ENCODE measurements at regions of chr12 and their contacts with region 1.

Region 1: GRCh38 chr12:29552324-29552927 is 54.9 kb upstream of the OVCH1 start:
- DNase-seq: peak; percentile 83
- ATAC-seq: peak; percentile 81
- H3K4me3 ChIP-seq: no peak overlapping the region
- H3K27ac ChIP-seq: no peak overlapping the region
- H3K4me1 ChIP-seq: peaks cover 6% of the 10 kb centered on the region
- H3K27me3 ChIP-seq: no peaks in the 10 kb centered on the region
- CTCF ChIP-seq: peak; percentile 96

Region 2: GRCh38 chr12:29581631-29582030 is 29.2 kb after region 1 on chr12:
- CTCF ChIA-PET with region 1: interaction called, 7 read pairs
- POLR2A ChIA-PET with region 1: no interaction called
- intact Hi-C with region 1: loop called (anchors 2 kb)
- DNase-seq: peak; percentile 91
- ATAC-seq: peak; percentile 87
- H3K4me3 ChIP-seq: peak overlapping the region; percentile 47; the same call in 1 of the 2 replicates
- H3K27ac ChIP-seq: peak overlapping the region; percentile 87
- H3K4me1 ChIP-seq: peaks cover 52% of the 10 kb centered on the region
- H3K27me3 ChIP-seq: no peaks in the 10 kb centered on the region
- CTCF ChIP-seq: no peak

Region 3: DNA sequence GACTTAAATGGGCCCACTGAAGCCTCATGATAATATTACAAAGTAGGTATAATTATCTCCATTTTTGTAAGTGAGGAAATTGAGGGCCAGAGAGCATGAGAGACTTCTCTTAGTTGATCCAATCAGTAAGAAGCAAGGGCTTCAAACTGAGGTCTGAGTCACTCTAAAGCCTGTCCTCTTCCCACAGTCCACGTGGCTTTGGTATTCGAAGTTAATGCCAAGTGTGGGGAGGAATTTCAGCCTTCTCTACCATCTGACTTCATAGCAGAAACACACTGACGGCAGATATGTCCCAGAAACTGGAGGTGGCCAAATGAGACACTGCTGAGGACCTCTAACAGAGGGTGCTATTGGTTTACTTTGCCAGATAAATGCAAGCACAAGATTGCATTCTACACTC is 59.5 kb after region 1 on chr12:
- CTCF ChIA-PET with region 1: no interaction called
- POLR2A ChIA-PET with region 1: no interaction called
- intact Hi-C with region 1: no loop called
- DNase-seq: no peak
- ATAC-seq: no peak
- H3K4me3 ChIP-seq: no peak overlapping the region
- H3K27ac ChIP-seq: no peak overlapping the region
- H3K4me1 ChIP-seq: peaks cover 4% of the 10 kb centered on the region; the same call in 1 of the 2 replicates
- H3K27me3 ChIP-seq: peaks cover 30% of the 10 kb centered on the region
- CTCF ChIP-seq: no peak

Region 4: DNA sequence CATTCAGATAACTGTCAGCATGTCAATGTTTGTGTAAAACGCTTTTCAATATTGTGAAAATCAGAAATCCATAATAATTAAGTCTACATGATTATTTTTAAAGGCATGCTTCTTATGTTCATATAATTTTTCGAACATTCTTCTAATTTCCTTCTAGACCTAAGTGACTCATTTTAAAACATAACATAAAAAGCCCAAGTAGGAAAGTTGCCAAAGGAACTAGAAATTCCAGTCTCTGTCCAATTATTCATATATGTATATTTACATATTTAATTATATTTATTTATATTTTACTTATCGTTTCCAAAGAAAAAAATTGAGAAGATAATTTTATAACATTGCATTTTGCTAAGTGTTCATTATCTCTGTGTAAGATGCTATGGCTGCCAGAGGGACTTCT is 120.9 kb after region 1 on chr12:
- CTCF ChIA-PET with region 1: no interaction called
- POLR2A ChIA-PET with region 1: no interaction called
- intact Hi-C with region 1: loop called (anchors 5 kb)
- DNase-seq: peak; percentile 74
- ATAC-seq: peak; percentile 13; the same call in 1 of the 2 replicates
- H3K4me3 ChIP-seq: no peak overlapping the region
- H3K27ac ChIP-seq: no peak overlapping the region
- H3K4me1 ChIP-seq: peaks cover 6% of the 10 kb centered on the region
- H3K27me3 ChIP-seq: peaks cover 22% of the 10 kb centered on the region
- CTCF ChIP-seq: no peak

Region 5: GRCh38 chr12:29782285-29782870 is 230.0 kb after region 1 on chr12:
- CTCF ChIA-PET with region 1: no interaction called
- POLR2A ChIA-PET with region 1: no interaction called
- intact Hi-C with region 1: loop called (anchors 1 kb)
- DNase-seq: peak; percentile 34
- ATAC-seq: no peak
- H3K4me3 ChIP-seq: peak overlapping the region; percentile 69; the same call in 1 of the 2 replicates
- H3K27ac ChIP-seq: no peak overlapping the region
- H3K4me1 ChIP-seq: no peaks in the 10 kb centered on the region
- H3K27me3 ChIP-seq: peaks cover 49% of the 10 kb centered on the region
- CTCF ChIP-seq: no peak

Region 6: GRCh38 chr12:29796823-29797263 is 244.4 kb after region 1 on chr12:
- CTCF ChIA-PET with region 1: interaction called, 4 read pairs
- POLR2A ChIA-PET with region 1: no interaction called
- intact Hi-C with region 1: loop called (anchors 5 kb)
- DNase-seq: peak; percentile 98
- ATAC-seq: peak; percentile 99
- H3K4me3 ChIP-seq: peak overlapping the region; percentile 14; the same call in 1 of the 2 replicates
- H3K27ac ChIP-seq: peak overlapping the region; percentile 29
- H3K4me1 ChIP-seq: peaks cover 24% of the 10 kb centered on the region
- H3K27me3 ChIP-seq: peaks cover 13% of the 10 kb centered on the region; the same call in 1 of the 2 replicates
- CTCF ChIP-seq: no peak